ENCODE measurements at regions of chr7 and their contacts with region 1.

Region 1: DNA sequence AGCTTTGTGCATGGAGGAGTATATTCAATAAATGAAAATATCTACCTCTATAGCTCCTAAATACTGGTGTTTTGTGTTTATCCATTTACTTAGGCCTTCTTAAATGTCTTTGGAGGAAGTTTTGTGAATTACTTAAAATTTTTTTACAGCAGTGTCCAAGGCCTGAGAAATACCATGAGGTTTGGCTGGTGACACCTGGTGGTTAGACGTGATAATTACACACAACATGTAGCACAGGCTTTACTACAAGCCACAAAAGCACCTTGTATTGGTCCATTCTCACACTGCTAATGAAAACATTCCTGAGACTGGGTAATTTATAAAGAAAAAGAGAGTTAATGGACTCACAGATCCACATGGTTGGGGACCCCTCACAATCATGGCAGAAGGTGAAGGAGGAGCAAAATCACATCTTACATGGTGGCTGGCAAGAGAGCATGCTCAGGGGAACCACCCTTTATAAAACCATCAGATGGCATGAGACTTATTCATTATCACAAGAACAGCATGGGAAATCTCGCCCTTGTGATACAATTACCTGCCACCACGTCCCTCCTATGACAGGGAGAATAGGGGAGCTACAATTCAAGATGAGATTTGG is 20.6 kb downstream of the HYAL4 start:
- DNase-seq: peak; percentile 57 to 72
- H3K4me3 ChIP-seq: no peak overlapping the region
- H3K4me3 Mint-ChIP-seq: no peak overlapping the region
- H3K27ac Mint-ChIP-seq: no peak overlapping the region
- H3K4me1 ChIP-seq: 0 out of 2 replicates have a peak, but pooled peaks cover 3% of the 10 kb centered on the region
- H3K4me1 Mint-ChIP-seq: peaks cover 8% of the 10 kb centered on the region
- H3K27me3 ChIP-seq: no peaks in the 10 kb centered on the region
- H3K27me3 Mint-ChIP-seq: no peaks in the 10 kb centered on the region
- CTCF ChIP-seq: peak; percentile 53 to 74

Region 2: DNA sequence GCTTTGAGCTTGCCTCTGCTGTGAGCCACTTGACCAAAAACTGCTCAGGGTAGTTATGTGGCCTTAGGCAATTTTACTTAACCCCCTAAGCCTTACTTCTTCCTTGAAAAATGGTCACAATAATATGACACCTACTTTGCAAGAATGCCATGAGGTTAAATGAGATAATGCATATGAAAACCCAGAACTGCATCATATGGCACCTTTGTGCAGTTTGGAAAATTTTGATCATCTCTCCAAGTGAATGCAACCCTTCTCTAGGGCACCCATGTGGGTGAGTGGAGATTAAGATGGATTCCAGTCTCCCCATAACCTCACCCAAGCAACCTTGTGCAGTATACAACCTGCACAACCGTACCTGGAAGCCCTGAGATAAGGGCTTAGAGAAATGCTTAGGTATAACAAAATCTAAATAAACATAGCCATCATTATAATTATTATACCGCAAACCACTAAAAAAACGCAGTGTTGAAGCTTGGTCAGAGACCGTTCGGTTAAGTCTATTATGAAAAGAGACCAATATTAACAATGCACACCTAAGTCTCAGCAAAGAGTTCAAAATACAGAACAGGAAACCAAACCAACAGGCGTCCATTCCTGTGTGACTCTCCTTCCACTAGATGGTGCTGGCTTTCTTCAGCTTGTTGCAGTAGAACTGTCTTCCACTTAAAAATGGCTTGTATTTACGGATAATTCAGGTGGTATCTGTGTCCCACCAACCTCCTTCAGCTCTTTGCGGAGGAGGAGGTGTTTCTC is 285.0 kb before region 1 on chr7:
- CTCF ChIA-PET with region 1: no interaction called
- POLR2A ChIA-PET with region 1: no interaction called
- intact Hi-C with region 1: loop called (anchors 1 kb)
- DNase-seq: peak; percentile 52 to 64
- H3K4me3 ChIP-seq: no peak overlapping the region
- H3K4me3 Mint-ChIP-seq: peak overlapping the region; percentile 58
- H3K27ac Mint-ChIP-seq: no peak overlapping the region
- H3K4me1 ChIP-seq: no peaks in the 10 kb centered on the region
- H3K4me1 Mint-ChIP-seq: peaks cover 5% of the 10 kb centered on the region
- H3K27me3 ChIP-seq: no peaks in the 10 kb centered on the region
- H3K27me3 Mint-ChIP-seq: peaks cover 4% of the 10 kb centered on the region
- CTCF ChIP-seq: peak; percentile 88 to 92

Region 3: DNA sequence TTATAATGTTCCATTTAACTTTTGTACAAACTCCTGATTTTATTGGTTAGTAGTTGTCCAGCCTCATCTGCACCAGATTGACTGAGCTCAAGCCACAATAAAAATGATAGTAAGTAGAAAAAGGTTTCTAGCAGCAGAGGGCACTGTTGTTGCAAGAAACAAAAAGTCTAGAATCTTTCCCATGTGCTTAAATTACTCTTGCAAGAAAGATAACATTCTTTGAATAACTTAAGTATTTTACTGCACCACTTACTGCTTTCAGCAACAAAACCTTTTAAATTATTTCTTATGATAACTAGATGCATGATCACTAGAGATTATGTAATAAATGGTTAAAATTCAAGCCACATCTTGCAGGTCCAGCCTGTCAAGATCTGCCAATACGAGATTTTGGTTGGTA is 182.9 kb before region 1 on chr7:
- CTCF ChIA-PET with region 1: interaction called, 5 read pairs
- POLR2A ChIA-PET with region 1: no interaction called
- intact Hi-C with region 1: loop called (anchors 1 kb)
- DNase-seq: peak in 1 of 2 experiments; percentile 54
- H3K4me3 ChIP-seq: no peak overlapping the region
- H3K4me3 Mint-ChIP-seq: no peak overlapping the region
- H3K27ac Mint-ChIP-seq: no peak overlapping the region
- H3K4me1 ChIP-seq: peaks cover 19% of the 10 kb centered on the region
- H3K4me1 Mint-ChIP-seq: no peaks in the 10 kb centered on the region
- H3K27me3 ChIP-seq: no peaks in the 10 kb centered on the region
- H3K27me3 Mint-ChIP-seq: no peaks in the 10 kb centered on the region
- CTCF ChIP-seq: peak; percentile 47 to 61

Region 4: GRCh38 chr7:123771261-123771660 is 94.4 kb before region 1 on chr7:
- CTCF ChIA-PET with region 1: interaction called, 5 read pairs
- POLR2A ChIA-PET with region 1: no interaction called
- intact Hi-C with region 1: loop called (anchors 1 kb)
- DNase-seq: no peak
- H3K4me3 ChIP-seq: no peak overlapping the region
- H3K4me3 Mint-ChIP-seq: no peak overlapping the region
- H3K27ac Mint-ChIP-seq: no peak overlapping the region
- H3K4me1 ChIP-seq: 0 out of 2 replicates have a peak, but pooled peaks cover 7% of the 10 kb centered on the region
- H3K4me1 Mint-ChIP-seq: peaks cover 14% of the 10 kb centered on the region
- H3K27me3 ChIP-seq: no peaks in the 10 kb centered on the region
- H3K27me3 Mint-ChIP-seq: no peaks in the 10 kb centered on the region
- CTCF ChIP-seq: no peak

Region 5: GRCh38 chr7:123819001-123819400 is 46.6 kb before region 1 on chr7:
- CTCF ChIA-PET with region 1: no interaction called
- POLR2A ChIA-PET with region 1: no interaction called
- intact Hi-C with region 1: loop called (anchors 5 kb)
- DNase-seq: no peak
- H3K4me3 ChIP-seq: no peak overlapping the region
- H3K4me3 Mint-ChIP-seq: no peak overlapping the region
- H3K27ac Mint-ChIP-seq: no peak overlapping the region
- H3K4me1 ChIP-seq: peaks cover 15% of the 10 kb centered on the region
- H3K4me1 Mint-ChIP-seq: peaks cover 20% of the 10 kb centered on the region
- H3K27me3 ChIP-seq: no peaks in the 10 kb centered on the region
- H3K27me3 Mint-ChIP-seq: no peaks in the 10 kb centered on the region
- CTCF ChIP-seq: no peak

Measured in Caco-2 (cell line).